Right cardiac atrium (tissue), 5 donors: ENCODE measurements at regions of chr2 and their contacts with region 1.

Region 1: DNA sequence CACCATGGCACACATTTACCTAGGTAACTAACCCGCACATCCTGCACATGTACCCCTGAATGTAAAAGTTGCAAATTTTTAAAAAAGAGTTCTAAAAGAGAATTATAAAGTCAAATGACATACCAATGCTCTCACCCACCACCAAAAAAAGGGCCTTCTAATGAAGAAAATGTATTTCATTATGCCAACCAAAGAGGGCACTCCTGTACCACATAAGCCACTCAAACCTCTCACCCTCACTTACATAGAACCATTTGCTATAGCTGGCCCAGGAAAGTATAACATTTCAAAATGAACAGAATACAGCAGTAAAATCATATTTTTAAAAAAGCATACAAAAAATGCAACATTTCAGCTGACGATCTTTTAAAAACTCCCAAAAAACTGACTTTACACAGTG is 241.5 kb upstream of the PKDCC start:
- DNase-seq: no peak
- ATAC-seq: no peak
- H3K4me3 ChIP-seq: no peak overlapping the region
- H3K27ac ChIP-seq: no peak overlapping the region
- H3K4me1 ChIP-seq: no peaks in the 10 kb centered on the region
- H3K27me3 ChIP-seq: no peaks in the 10 kb centered on the region

Region 2: GRCh38 chr2:41510108-41510507 is 296.2 kb before region 1 on chr2:
- intact Hi-C with region 1: no loop called
- DNase-seq: no peak
- ATAC-seq: peak in 1 of 2 donors; percentile 36
- H3K4me3 ChIP-seq: no peak overlapping the region
- H3K27ac ChIP-seq: no peak overlapping the region
- H3K4me1 ChIP-seq: no peaks in the 10 kb centered on the region
- H3K27me3 ChIP-seq: no peaks in the 10 kb centered on the region

Region 3: GRCh38 chr2:41678639-41679038 is 127.6 kb before region 1 on chr2:
- intact Hi-C with region 1: no loop called
- DNase-seq: no peak
- ATAC-seq: no peak
- H3K4me3 ChIP-seq: no peak overlapping the region
- H3K27ac ChIP-seq: no peak overlapping the region
- H3K4me1 ChIP-seq: no peaks in the 10 kb centered on the region
- H3K27me3 ChIP-seq: no peaks in the 10 kb centered on the region

Region 4: DNA sequence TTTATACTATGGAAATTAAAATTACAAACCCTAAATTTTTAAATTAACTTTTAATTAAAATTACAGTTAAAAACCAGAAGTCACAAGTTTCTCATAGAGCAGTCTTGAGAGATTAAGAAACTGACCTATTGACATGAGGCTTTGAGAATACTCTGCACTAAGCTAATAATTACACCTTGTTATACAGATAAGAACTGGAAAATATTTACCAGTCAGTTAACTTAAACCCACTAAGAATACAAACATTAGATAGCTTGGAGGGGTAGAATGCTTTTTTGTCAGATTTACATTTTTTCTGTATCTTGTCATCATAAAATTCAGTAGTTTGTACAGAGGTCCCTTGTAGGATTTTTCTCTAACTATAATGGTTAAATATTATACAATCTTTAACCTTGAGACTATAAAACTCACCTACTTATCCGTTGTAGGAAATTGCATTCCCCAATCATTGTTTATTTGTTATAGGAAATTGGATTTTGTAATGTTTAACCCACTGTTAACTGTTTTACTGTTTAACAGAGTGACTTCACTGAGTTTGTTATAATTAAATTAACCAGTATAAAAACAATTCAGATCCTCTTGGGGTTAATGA is 21.9 kb after region 1 on chr2:
- intact Hi-C with region 1: loop called in 1 of 4 experiments (anchors 1 kb)
- DNase-seq: no peak
- ATAC-seq: no peak
- H3K4me3 ChIP-seq: no peak overlapping the region
- H3K27ac ChIP-seq: no peak overlapping the region
- H3K4me1 ChIP-seq: no peaks in the 10 kb centered on the region
- H3K27me3 ChIP-seq: no peaks in the 10 kb centered on the region

Region 5: DNA sequence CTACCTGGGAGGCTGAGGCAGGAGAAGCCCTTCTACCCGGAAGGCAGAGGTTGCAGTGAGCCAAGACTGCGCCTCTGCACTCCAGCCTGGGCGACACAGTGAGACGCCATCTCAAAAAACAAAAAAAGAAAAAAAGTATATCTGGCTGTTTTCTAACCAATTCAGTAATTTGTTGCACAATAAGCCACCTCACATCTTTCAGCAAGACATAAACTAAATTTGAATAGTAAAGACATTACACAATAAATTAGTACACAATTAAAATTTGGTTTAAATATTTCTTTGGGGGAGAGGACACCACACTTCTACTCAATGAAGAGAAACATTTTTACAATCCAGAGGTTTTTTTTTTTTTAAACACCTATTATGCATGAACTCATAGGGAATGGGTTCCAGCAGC is 726.1 kb after region 1 on chr2:
- intact Hi-C with region 1: no loop called
- DNase-seq: no peak
- ATAC-seq: no peak
- H3K4me3 ChIP-seq: no peak overlapping the region
- H3K27ac ChIP-seq: no peak overlapping the region
- H3K4me1 ChIP-seq: no peaks in the 10 kb centered on the region
- H3K27me3 ChIP-seq: no peaks in the 10 kb centered on the region

Region 6: GRCh38 chr2:43266711-43267111 is 1460.4 kb after region 1 on chr2:
- intact Hi-C with region 1: no loop called
- DNase-seq: peak; percentile 65 to 86 (median 84)
- ATAC-seq: no peak
- H3K4me3 ChIP-seq: no peak overlapping the region
- H3K27ac ChIP-seq: no peak overlapping the region
- H3K4me1 ChIP-seq: peaks cover 25% of the 10 kb centered on the region
- H3K27me3 ChIP-seq: no peaks in the 10 kb centered on the region